ENCODE measurements at regions of chr15 and their contacts with region 1.

Region 1: GRCh38 chr15:64355944-64356709 is at the start of gene CSNK1G1:
- DNase-seq: peak; percentile 99
- H3K4me3 ChIP-seq: peak within 1 kb of the TSS; percentile 88
- H3K27ac ChIP-seq: peak within 1 kb of the TSS; percentile 82
- H3K4me1 ChIP-seq: peaks cover 21% of the 10 kb centered on the region
- H3K27me3 ChIP-seq: no peaks in the 10 kb centered on the region
- total RNA-seq, gene CSNK1G1: 14.3 and 17.1 TPM in 2 replicates

Region 2: DNA sequence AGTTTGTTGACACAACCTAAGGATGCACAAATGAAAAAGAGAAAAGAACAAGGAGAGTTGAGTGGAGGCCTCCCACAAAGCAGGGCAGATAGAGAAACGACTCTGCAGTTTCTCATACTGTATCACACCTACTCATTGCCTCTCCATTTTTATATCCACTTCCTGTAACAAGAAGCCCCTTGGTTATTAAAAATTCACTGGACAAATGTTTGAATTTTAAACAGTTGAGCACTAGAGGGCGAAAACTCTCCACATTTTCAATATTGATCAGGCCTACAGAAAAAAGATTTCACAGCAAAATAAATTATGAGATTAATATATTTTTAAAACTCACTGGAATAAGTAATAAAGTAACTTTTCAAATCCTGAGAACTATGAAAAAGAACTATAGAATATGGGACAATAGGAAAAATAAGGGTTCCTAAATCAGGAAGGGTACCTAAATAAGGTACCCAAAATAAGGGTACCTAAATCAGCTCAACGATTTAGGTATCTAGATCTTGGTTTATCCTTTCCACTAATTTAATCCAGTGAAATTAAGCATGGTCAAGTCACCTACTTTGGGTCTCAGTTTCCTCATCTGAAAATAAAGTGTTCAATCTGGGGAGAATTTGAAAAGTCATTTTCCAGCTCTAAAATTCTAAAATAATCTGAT is 146.3 kb before region 1 on chr15:
- in situ Hi-C with region 1: loop called (anchors 10 kb)
- DNase-seq: peak; percentile 64
- H3K4me3 ChIP-seq: no peak overlapping the region
- H3K27ac ChIP-seq: no peak overlapping the region
- H3K4me1 ChIP-seq: no peaks in the 10 kb centered on the region
- H3K27me3 ChIP-seq: no peaks in the 10 kb centered on the region

Region 3: GRCh38 chr15:64305261-64305660 is 50.9 kb before region 1 on chr15:
- in situ Hi-C with region 1: no loop called
- DNase-seq: peak; percentile 21
- H3K4me3 ChIP-seq: no peak overlapping the region
- H3K27ac ChIP-seq: no peak overlapping the region
- H3K4me1 ChIP-seq: no peaks in the 10 kb centered on the region
- H3K27me3 ChIP-seq: no peaks in the 10 kb centered on the region

Measured in GM23248 (cell line).